ENCODE measurements at regions of chr4 and their contacts with region 1.

Region 1: DNA sequence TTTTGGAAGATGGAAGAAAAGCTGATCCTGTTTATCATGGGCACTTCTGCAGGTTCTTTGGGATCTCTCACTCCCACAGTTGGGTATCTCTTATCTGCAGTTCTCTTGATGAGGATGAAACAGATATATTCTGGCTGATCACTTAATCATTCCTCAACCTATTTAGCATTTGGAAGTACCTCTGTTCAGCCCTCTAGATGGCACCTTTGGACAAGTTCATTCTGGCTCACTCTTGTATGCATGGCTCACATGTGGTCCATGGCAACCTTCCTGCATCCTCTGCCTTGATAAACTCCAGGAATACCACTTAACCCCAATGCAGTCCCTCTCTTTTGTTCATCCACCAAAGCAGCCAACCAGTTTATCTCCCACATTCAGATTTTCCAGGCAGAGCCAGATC is 74.2 kb downstream of the SMARCA5 start:
- DNase-seq: no peak

Region 2: GRCh38 chr4:143531380-143531779 is 56.3 kb before region 1 on chr4:
- intact Hi-C with region 1: no loop called
- DNase-seq: no peak

Region 3: GRCh38 chr4:143768007-143768591 is 180.4 kb after region 1 on chr4:
- intact Hi-C with region 1: loop called (anchors 10 kb)
- DNase-seq: no peak

Measured in cardiac septum (tissue), 1 donor.